ENCODE measurements at regions of chr11 and their contacts with region 1.

Region 1: GRCh38 chr11:69642913-69643632 is 2.1 kb downstream of the CCND1 start:
- DNase-seq: peak; percentile 85 to 95
- H3K4me3 ChIP-seq: peak overlapping the region; percentile 73
- H3K4me3 Mint-ChIP-seq: peak overlapping the region; percentile 96
- H3K27ac Mint-ChIP-seq: peak overlapping the region; percentile 45
- H3K4me1 ChIP-seq: peaks cover 10% of the 10 kb centered on the region
- H3K4me1 Mint-ChIP-seq: peaks cover 13% of the 10 kb centered on the region
- H3K27me3 ChIP-seq: no peaks in the 10 kb centered on the region
- H3K27me3 Mint-ChIP-seq: no peaks in the 10 kb centered on the region
- CTCF ChIP-seq: peak; percentile 96 to 99

Region 2: GRCh38 chr11:69101115-69101791 is 541.8 kb before region 1 on chr11:
- CTCF ChIA-PET with region 1: interaction called, 7 read pairs
- POLR2A ChIA-PET with region 1: interaction called, 4 read pairs
- intact Hi-C with region 1: loop called (anchors 1 kb)
- DNase-seq: peak; percentile 82 to 93
- H3K4me3 ChIP-seq: no peak overlapping the region
- H3K4me3 Mint-ChIP-seq: no peak overlapping the region
- H3K27ac Mint-ChIP-seq: no peak overlapping the region
- H3K4me1 ChIP-seq: peaks cover 6% of the 10 kb centered on the region; the same call in 1 of the 2 replicates
- H3K4me1 Mint-ChIP-seq: peaks cover 8% of the 10 kb centered on the region
- H3K27me3 ChIP-seq: no peaks in the 10 kb centered on the region
- H3K27me3 Mint-ChIP-seq: no peaks in the 10 kb centered on the region
- CTCF ChIP-seq: peak; percentile 100

Region 3: GRCh38 chr11:69274531-69275255 is 368.4 kb before region 1 on chr11:
- CTCF ChIA-PET with region 1: no interaction called
- POLR2A ChIA-PET with region 1: interaction called, 3 read pairs
- intact Hi-C with region 1: loop called (anchors 1 kb)
- DNase-seq: peak; percentile 96 to 98
- H3K4me3 ChIP-seq: no peak overlapping the region
- H3K4me3 Mint-ChIP-seq: peak overlapping the region; percentile 3
- H3K27ac Mint-ChIP-seq: peak overlapping the region; percentile 5
- H3K4me1 ChIP-seq: peaks cover 51% of the 10 kb centered on the region
- H3K4me1 Mint-ChIP-seq: peaks cover 19% of the 10 kb centered on the region
- H3K27me3 ChIP-seq: no peaks in the 10 kb centered on the region
- H3K27me3 Mint-ChIP-seq: no peaks in the 10 kb centered on the region
- CTCF ChIP-seq: no peak

Region 4: DNA sequence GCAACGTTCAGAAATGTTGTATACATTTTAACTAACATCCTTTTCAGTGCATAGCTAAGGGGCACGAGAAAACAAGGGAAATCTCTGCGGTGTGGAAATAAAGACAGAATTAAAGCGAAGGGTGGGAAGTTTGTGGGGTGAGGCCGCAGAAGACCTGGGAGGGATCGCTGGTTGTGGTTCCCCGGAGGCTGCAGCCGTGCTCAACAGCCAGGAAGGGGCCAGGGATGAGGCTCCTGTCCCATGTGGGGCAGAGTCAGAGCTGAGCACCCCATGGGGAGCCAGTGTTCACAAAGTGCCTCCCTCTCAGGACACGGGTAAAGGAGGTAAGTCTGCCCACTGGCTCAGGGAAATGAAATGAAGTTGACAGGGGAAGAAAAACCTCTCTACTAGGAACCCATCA is 281.6 kb before region 1 on chr11:
- CTCF ChIA-PET with region 1: interaction called, 14 read pairs
- POLR2A ChIA-PET with region 1: no interaction called
- intact Hi-C with region 1: no loop called
- DNase-seq: no peak
- H3K4me3 ChIP-seq: no peak overlapping the region
- H3K4me3 Mint-ChIP-seq: no peak overlapping the region
- H3K27ac Mint-ChIP-seq: peak overlapping the region; percentile 16
- H3K4me1 ChIP-seq: peaks cover 14% of the 10 kb centered on the region
- H3K4me1 Mint-ChIP-seq: peaks cover 7% of the 10 kb centered on the region
- H3K27me3 ChIP-seq: no peaks in the 10 kb centered on the region
- H3K27me3 Mint-ChIP-seq: no peaks in the 10 kb centered on the region
- CTCF ChIP-seq: no peak

Region 5: GRCh38 chr11:69436973-69437875 is 205.8 kb before region 1 on chr11:
- CTCF ChIA-PET with region 1: interaction called, 3 read pairs
- POLR2A ChIA-PET with region 1: interaction called, 17 read pairs
- intact Hi-C with region 1: loop called (anchors 1 kb)
- DNase-seq: peak; percentile 100
- H3K4me3 ChIP-seq: no peak overlapping the region
- H3K4me3 Mint-ChIP-seq: peak overlapping the region; percentile 44
- H3K27ac Mint-ChIP-seq: peak overlapping the region; percentile 92
- H3K4me1 ChIP-seq: peaks cover 75% of the 10 kb centered on the region
- H3K4me1 Mint-ChIP-seq: peaks cover 62% of the 10 kb centered on the region
- H3K27me3 ChIP-seq: no peaks in the 10 kb centered on the region
- H3K27me3 Mint-ChIP-seq: no peaks in the 10 kb centered on the region
- CTCF ChIP-seq: peak; percentile 42 to 57

Region 6: DNA sequence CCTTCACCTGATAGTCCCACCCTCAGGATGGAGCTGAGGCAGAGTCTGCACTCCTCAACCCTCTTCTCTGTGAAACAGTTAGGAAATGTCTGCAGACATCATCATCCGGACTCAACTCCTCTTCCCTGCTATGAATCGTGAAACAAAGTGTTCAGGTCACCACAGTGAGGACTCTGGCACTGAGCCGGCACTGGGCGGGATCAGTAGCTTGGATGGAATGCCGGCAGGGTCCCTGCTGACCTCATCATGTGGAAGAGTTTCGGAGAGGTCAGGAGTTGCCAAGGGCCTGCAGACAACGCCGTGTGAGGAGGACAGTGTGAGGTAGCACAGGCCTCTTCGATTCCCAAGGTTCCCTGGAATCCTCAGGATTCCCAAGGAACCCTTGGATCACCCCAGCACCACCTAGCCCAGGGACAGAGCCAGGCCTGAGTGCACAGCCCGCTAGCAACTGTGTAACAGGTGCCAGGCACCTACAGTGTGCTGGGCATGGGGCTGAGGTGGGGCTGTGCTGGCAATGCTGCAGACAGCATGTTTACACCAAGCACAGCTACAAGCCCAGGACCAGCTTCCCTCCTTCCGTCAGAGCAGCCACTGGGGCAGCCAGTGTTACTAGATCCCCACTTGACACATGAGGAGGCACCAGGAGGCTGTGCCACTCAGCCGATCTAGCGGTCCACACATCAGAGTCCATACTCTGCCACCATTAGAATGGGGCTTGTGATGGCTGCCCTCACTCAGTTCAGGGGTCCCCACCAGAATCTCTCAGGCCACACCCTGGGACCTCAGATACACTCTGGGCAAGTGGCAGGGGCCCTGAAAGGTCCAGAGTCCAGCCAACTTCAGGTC is 162.3 kb before region 1 on chr11:
- CTCF ChIA-PET with region 1: interaction called, 3 read pairs
- POLR2A ChIA-PET with region 1: interaction called, 11 read pairs
- intact Hi-C with region 1: loop called (anchors 2 kb)
- DNase-seq: no peak
- H3K4me3 ChIP-seq: no peak overlapping the region
- H3K4me3 Mint-ChIP-seq: peak overlapping the region; percentile 80
- H3K27ac Mint-ChIP-seq: peak overlapping the region; percentile 95
- H3K4me1 ChIP-seq: peaks cover 45% of the 10 kb centered on the region
- H3K4me1 Mint-ChIP-seq: peaks cover 17% of the 10 kb centered on the region
- H3K27me3 ChIP-seq: no peaks in the 10 kb centered on the region
- H3K27me3 Mint-ChIP-seq: no peaks in the 10 kb centered on the region
- CTCF ChIP-seq: no peak

Region 7: DNA sequence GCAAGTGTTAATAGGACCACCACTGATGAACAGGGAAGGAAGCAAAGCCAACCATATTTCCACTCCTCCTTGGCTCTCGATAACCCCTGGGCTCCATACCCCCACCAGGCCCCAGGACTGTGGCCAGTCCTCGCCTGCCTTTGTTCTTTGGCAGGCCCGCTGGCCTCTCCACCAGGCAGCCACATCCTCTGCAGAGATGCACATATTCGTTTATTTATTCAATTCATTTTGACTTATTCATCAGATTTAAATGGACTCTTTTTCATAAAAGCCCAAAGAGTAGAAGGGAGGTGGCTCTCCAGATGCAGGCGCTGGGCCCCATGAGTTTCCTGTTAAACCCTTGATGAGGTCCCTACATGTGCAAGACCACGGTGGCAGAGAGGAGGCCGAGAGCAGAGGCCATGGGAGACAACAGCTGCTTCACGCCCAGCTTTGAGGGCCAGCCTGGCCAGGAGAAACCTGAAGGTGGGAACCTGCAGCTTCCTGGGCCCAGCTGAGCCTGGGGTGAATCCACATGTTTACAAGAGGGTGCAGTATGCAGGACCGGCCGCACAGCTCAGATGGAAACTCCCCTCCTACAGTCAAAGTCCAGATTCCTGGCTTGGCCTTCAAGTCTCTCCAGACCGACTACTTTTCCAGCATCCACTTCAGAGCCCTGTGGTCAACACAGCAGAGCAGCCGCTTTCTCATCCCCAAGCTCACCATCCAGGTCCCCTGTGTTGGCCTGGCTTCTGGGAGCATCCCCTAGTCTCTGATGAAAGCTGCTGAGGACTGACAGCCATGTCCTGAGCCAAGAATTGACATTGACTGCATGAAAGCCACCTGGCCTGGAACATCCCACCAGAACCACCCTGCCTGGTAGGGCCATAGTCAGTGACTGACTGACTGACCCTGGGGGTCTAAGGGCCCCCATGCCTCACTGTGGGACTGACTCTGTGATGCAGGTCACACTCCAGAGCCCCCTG is 41.8 kb before region 1 on chr11:
- CTCF ChIA-PET with region 1: no interaction called
- POLR2A ChIA-PET with region 1: interaction called, 10 read pairs
- intact Hi-C with region 1: no loop called
- DNase-seq: peak; percentile 83 to 92
- H3K4me3 ChIP-seq: no peak overlapping the region
- H3K4me3 Mint-ChIP-seq: peak overlapping the region; percentile 24
- H3K27ac Mint-ChIP-seq: peak overlapping the region; percentile 77
- H3K4me1 ChIP-seq: peaks cover 24% of the 10 kb centered on the region
- H3K4me1 Mint-ChIP-seq: peaks cover 33% of the 10 kb centered on the region
- H3K27me3 ChIP-seq: no peaks in the 10 kb centered on the region
- H3K27me3 Mint-ChIP-seq: no peaks in the 10 kb centered on the region
- CTCF ChIP-seq: no peak

Measured in Caco-2 (cell line).